ENCODE measurements at regions of chr20 and their contacts with region 1.

Region 1: GRCh38 chr20:33097001-33097400 is 17.6 kb downstream of the BPIFB4 start:
- DNase-seq: no peak
- ATAC-seq: peak in 2 of 4 donors; percentile 46 to 60
- H3K4me3 ChIP-seq: no peak overlapping the region
- H3K27ac ChIP-seq: no peak overlapping the region
- H3K4me1 ChIP-seq: no peaks in the 10 kb centered on the region
- H3K27me3 ChIP-seq: no peaks in the 10 kb centered on the region
- CTCF ChIP-seq: no peak

Region 2: DNA sequence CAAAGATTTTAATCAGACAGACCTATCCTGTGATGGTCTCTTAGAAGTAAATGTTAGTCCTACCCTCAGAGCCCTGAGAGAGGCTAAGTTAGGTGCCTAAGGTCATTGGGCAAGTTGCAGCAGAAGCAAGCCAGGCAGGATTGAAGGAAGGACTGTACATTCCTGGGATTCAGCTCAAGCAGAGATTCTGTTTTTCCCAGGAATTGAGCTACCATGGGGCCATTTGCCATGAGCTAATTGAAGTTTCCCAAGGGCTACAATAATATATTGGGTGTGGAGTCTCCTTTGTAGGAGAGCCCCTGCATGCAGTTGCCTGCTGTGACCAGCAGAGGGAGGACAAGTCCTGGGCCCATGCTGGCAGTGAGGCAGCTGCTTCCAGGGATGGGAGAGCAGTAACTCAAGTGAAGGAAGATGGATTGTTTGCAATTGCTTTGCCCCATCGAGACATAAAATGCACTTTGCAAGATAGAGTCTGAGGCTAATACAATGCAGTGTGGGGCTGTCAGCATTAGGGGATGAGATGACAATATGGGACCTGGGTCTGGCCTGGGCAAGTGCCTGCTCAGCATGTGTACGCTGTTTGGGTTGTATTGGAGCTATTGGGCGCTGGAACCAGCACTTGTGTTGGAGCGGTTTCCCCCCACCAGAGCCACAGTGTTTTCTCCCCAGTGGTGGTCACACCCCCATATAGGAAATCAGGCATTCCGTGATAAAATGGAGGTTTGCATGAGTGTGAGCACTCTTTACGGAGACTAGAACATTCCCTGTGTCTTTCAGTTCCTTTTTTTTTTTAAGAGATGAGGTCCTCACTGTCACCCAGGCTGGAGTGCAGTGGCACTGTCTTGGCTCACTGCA is 306.9 kb before region 1 on chr20:
- intact Hi-C with region 1: loop called in 1 of 3 experiments (anchors 10 kb)
- DNase-seq: peak; percentile 53 to 90 (median 74)
- ATAC-seq: peak; percentile 84 to 98 (median 96)
- H3K4me3 ChIP-seq: no peak overlapping the region
- H3K27ac ChIP-seq: no peak overlapping the region
- H3K4me1 ChIP-seq: no peaks in the 10 kb centered on the region
- H3K27me3 ChIP-seq: no peaks in the 10 kb centered on the region
- CTCF ChIP-seq: peak; percentile 91 to 99 (median 98)

Region 3: DNA sequence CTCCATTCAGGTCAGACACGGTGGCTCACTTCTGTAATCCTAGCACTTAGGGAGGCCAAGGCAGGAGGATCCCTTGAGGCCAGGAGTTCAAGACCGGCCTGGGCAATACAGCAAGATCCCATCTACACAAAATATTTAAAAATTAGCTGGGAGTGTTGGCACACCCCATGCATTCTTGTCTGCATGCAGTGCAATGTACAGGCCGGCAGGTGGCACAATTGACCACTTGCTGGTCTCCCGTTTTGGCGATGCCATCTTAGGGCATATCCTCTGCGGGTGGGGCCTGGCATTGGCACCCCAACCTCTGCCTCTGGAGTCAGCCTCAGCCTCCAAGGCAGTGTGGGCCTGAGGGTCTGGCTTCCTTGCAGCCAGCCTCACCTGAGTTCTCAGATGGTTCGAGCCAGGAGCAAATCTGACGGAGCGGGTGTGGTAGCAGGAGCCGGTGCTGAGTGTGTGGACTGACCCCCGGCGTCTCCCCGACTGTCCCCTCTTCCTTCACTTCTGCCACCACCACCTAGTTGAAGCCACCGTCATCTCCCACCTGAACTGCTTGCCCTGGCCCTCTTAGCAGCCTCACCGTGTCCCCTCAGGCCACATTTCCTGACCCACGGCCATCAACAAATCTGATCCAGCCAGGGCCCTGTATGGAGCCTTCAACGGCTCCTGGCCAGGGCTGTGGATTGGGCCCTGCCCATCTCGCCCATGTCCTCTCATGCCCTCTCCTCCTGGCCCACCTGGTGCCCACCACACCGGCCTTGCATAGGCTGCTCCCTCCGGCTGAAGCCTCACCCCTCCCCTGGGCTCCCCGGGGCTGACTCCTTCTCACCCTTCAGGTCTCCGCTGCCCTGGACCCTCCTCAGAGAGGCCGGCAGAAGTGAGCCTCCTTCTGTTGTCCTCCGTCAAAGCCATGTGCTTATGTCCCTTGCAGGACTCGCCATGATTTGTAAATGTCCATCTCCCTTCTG is 194.3 kb before region 1 on chr20:
- intact Hi-C with region 1: loop called in 2 of 3 experiments (anchors 10 kb)
- DNase-seq: peak in 5 of 6 donors; percentile 21 to 72 (median 47)
- ATAC-seq: peak; percentile 66 to 94 (median 89)
- H3K4me3 ChIP-seq: no peak overlapping the region
- H3K27ac ChIP-seq: no peak overlapping the region
- H3K4me1 ChIP-seq: no peaks in the 10 kb centered on the region
- H3K27me3 ChIP-seq: no peaks in the 10 kb centered on the region
- CTCF ChIP-seq: peak; percentile 76 to 89 (median 84)

Region 4: GRCh38 chr20:33211817-33212424 is 114.9 kb after region 1 on chr20:
- intact Hi-C with region 1: loop called in 2 of 3 experiments (anchors 5 to 10 kb)
- DNase-seq: peak; percentile 42 to 80 (median 66)
- ATAC-seq: peak; percentile 87 to 97 (median 96)
- H3K4me3 ChIP-seq: no peak overlapping the region
- H3K27ac ChIP-seq: no peak overlapping the region
- H3K4me1 ChIP-seq: peaks cover 0 to 3% (median 0%) of the 10 kb centered on the region in 3 donors
- H3K27me3 ChIP-seq: no peaks in the 10 kb centered on the region
- CTCF ChIP-seq: peak; percentile 18 to 53 (median 40)

Region 5: DNA sequence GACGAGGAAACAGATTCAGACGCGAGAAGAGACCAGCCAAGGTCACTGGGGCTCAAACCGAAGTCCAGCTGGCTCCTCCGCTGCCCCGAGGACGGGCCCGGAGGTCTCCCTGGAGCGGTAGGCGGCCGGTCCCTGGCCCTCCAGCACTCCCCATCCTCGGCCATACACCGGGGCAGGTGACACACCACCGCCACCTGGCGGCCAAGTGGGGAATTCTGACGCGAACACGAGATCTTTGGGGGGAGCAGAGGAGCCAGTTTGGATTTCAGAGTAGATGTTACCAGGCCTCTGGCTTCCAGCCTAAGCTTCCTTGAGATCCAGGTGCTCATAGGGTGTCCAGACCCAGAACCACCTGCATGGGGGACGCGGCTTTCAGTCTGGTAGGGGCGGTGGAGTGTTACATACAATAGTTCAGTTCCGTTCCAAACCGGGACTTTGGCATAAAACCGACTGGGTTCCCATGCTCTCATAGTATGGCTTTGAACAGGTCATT is 202.2 kb after region 1 on chr20:
- intact Hi-C with region 1: loop called in 1 of 3 experiments (anchors 10 kb)
- DNase-seq: peak; percentile 32 to 91 (median 72)
- ATAC-seq: peak; percentile 46 to 92 (median 92)
- H3K4me3 ChIP-seq: no peak overlapping the region
- H3K27ac ChIP-seq: no peak overlapping the region
- H3K4me1 ChIP-seq: no peaks in the 10 kb centered on the region
- H3K27me3 ChIP-seq: no peaks in the 10 kb centered on the region
- CTCF ChIP-seq: peak; percentile 77 to 91 (median 90)